MCF 10A (cell line): ENCODE measurements at regions of chr9 and their contacts with region 1.

Region 1: GRCh38 chr9:71431931-71432330 is 310.5 kb upstream of the TRPM3 start:
- DNase-seq: no peak
- H3K4me3 Mint-ChIP-seq: no peak overlapping the region
- H3K27ac Mint-ChIP-seq: no peak overlapping the region
- H3K4me1 Mint-ChIP-seq: no peaks in the 10 kb centered on the region
- H3K27me3 Mint-ChIP-seq: peaks cover 13% of the 10 kb centered on the region
- CTCF ChIP-seq: no peak

Region 2: DNA sequence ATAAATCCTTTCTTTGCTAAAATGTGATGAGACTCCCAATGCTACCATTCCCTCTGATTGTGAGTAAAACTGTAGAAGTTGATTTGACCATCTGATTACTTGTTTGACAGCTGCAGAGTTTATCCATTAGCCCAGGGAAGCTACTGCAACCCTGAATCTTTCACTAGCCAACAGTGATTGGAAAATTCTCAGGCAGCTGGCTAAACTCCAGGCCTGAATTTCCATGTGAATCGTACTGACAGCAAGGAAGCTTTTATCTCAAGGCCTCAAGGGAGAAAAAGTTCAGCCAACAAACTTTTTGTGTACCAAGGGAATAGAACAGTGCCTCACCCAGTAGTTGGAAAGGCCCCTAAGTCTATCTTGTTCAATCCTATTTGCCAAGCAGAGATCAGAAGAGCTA is 63.8 kb before region 1 on chr9:
- CTCF ChIA-PET with region 1: no interaction called
- POLR2A ChIA-PET with region 1: no interaction called
- intact Hi-C with region 1: loop called (anchors 10 kb)
- DNase-seq: no peak
- H3K4me3 Mint-ChIP-seq: no peak overlapping the region
- H3K27ac Mint-ChIP-seq: no peak overlapping the region
- H3K4me1 Mint-ChIP-seq: no peaks in the 10 kb centered on the region
- H3K27me3 Mint-ChIP-seq: peaks cover 7% of the 10 kb centered on the region
- CTCF ChIP-seq: no peak

Region 3: DNA sequence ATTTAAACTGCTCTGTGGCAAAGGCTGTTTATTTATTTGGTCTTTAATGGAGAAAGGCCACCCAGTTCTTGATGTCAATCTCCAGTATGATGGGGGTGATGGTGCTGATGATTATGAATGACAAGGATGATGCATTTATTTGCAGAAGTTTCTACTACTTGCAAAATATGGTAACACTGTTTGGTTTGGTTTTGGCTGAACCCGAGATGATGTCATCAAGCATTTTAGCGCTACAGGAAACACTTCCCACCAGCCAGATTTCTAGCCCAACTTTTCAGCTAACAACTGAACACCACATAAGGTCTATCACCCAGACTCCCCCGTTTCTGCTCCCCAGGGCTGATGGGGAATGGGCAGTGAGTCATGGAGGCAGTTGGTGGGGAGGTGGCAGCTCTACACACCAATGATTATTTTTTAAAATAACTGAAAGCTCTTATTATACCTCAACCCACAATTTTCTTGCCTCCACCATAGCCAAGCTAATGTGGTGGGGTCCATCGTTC is 33.4 kb after region 1 on chr9:
- CTCF ChIA-PET with region 1: no interaction called
- POLR2A ChIA-PET with region 1: no interaction called
- intact Hi-C with region 1: no loop called
- DNase-seq: no peak
- H3K4me3 Mint-ChIP-seq: no peak overlapping the region
- H3K27ac Mint-ChIP-seq: no peak overlapping the region
- H3K4me1 Mint-ChIP-seq: no peaks in the 10 kb centered on the region
- H3K27me3 Mint-ChIP-seq: peaks cover 21% of the 10 kb centered on the region
- CTCF ChIP-seq: no peak

Region 4: GRCh38 chr9:71567890-71568289 is 136.0 kb after region 1 on chr9:
- CTCF ChIA-PET with region 1: no interaction called
- POLR2A ChIA-PET with region 1: no interaction called
- intact Hi-C with region 1: no loop called
- DNase-seq: no peak
- H3K4me3 Mint-ChIP-seq: no peak overlapping the region
- H3K27ac Mint-ChIP-seq: no peak overlapping the region
- H3K4me1 Mint-ChIP-seq: peaks cover 6% of the 10 kb centered on the region
- H3K27me3 Mint-ChIP-seq: no peaks in the 10 kb centered on the region
- CTCF ChIP-seq: no peak